Panc1 (cell line): ENCODE measurements at regions of chr9 and their contacts with region 1.

Region 1: DNA sequence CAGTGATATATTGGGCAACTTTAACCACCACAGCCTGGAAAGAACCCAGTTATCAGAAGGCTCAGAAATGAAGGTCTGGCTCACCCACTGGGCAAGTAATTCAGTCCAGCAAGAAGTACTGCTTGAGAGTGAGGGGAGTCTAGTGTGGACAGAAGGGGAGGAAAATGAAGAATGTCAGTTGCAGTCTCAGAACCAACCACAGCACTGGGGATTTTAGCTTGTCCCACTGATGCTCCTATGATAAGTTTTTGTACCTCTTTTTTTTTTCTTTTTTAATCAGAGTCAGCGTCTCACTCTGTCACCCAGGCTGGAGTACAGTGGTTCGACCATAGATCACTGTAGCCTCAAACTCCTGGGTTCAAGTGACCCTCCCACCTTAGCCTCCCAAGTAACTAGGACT is 9.4 kb upstream of the CD72 start:
- DNase-seq: no peak
- ATAC-seq: no peak
- H3K4me3 ChIP-seq: no peak overlapping the region
- H3K27ac ChIP-seq: no peak overlapping the region
- H3K4me1 ChIP-seq: no peaks in the 10 kb centered on the region
- H3K27me3 ChIP-seq: no peaks in the 10 kb centered on the region
- CTCF ChIP-seq: no peak

Region 2: DNA sequence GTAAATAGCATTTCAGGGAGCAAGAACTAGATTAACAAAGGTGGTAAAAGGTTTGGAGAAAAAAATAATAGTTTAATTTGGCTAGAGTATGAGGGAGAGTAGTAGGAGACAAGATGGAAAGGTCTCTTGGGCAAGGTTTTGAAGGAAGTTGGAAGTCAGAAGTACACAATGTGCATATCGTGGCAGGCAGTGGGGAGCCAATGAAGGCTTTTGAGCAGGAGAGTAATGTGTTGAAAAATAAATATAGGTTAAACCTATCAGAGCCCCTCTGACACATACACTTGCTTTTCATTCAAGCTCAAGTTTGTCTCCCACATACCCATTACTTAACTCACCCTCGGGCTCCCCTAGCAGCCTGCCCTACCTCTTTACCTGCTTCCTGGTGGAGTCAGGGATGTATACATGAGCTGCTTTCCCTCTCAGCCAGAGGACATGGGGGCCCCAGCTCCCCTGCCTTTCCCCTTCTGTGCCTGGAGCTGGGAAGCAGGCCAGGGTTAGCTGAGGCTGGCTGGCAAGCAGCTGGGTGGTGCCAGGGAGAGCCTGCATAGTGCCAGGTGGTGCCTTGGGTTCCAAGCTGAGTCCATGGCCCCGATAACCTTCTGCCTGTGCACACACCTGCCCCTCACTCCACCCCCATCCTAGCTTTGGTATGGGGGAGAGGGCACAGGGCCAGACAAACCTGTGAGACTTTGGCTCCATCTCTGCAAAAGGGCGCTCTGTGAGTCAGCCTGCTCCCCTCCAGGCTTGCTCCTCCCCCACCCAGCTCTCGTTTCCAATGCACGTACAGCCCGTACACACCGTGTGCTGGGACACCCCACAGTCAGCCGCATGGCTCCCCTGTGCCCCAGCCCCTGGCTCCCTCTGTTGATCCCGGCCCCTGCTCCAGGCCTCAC is 45.8 kb after region 1 on chr9 and contains the start of gene CA9:
- CTCF ChIA-PET with region 1: no interaction called
- POLR2A ChIA-PET with region 1: interaction called, 10 read pairs
- in situ Hi-C with region 1: no loop called
- intact Hi-C with region 1: no loop called
- DNase-seq: no peak
- ATAC-seq: peak; percentile 8; the same call in 1 of the 2 replicates
- H3K4me3 ChIP-seq: no peak within 1 kb of the TSS
- H3K27ac ChIP-seq: no peak within 1 kb of the TSS
- H3K4me1 ChIP-seq: no peaks in the 10 kb centered on the region; the same call in 1 of the 2 replicates
- H3K27me3 ChIP-seq: no peaks in the 10 kb centered on the region
- CTCF ChIP-seq: no peak
- total RNA-seq, gene CA9: 0.31 TPM